Cardiac septum (tissue), 1 donor: ENCODE measurements at regions of chr1 and their contacts with region 1.

Region 1: DNA sequence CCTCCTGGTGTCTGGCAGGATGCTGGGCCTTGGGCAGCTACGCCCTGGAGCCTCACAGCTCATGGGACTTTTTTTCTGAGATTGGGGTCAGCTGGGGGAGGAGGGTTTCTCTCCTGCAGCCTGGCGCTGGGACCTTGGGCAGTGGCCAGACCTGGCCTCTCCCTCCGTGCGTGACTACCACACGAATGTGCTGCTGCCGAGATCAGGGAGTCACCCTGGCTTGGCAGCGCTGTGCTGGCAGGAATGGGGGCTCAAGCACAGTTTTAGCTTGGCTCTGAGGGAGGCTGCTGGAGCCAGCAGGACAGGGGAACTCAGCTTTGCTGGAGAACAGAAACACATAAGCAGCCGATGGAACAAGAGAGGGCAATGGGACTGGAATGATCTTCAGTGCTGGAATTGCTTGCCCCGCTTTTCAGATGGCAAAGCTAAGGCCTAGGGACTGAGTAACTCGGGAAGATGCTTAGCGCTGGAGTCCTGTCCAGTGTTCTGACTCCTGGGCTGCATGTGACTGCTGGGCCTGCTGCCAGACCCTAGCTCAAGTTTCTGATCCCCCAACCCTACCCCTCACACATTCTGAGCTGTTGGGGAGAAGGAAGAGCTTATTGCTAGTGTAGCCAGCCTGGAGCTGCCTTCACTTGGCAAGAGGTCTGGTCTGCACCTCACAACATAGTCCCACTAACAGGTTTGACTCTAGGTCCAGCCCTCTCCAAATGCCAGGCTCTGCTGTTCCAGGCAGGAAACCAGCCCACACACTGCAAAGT is 69.9 kb downstream of the NAV1 start:
- DNase-seq: no peak

Region 2: DNA sequence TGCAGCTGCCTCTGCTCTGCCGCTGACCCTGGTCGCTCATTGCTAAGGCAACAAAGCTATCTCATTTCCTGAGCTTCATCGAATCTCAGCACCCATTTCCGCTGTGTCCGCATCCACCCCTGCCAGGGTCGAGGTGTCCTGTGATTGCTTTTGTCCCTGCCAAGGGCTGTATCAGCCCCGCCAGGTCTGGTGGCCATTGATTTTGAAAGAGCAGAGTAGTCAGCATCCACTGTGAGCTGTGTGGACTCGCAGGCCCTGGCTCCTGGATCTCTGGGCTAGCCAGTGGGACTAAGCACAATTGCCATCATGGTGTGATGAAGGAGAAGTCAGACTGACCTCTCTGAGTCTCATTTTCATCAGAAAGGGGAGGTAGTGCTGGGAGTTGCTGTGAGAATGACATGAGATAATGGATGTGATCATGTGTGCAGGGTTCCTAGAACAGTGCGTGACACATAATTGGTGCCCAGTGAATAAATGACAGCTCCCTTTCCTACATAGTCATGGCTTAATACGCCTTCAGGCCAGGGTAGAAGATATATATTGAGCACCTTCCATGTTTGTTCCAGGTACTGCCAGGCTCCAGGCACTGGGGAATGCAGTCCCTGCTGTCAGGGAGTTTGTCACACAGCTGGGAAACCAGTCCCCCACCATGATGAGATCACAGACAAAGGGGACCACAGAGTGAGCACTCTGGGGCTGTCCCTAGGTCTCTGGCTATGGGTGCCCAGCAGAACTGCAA is 37.8 kb before region 1 on chr1:
- intact Hi-C with region 1: loop called (anchors 5 kb)
- DNase-seq: peak; percentile 75

Region 3: GRCh38 chr1:201696217-201696761 is 87.5 kb after region 1 on chr1:
- intact Hi-C with region 1: no loop called
- DNase-seq: peak; percentile 90

Region 4: GRCh38 chr1:202029171-202029665 is 420.4 kb after region 1 on chr1:
- intact Hi-C with region 1: no loop called
- DNase-seq: no peak